ENCODE measurements at regions of chr12 and their contacts with region 1.

Region 1: DNA sequence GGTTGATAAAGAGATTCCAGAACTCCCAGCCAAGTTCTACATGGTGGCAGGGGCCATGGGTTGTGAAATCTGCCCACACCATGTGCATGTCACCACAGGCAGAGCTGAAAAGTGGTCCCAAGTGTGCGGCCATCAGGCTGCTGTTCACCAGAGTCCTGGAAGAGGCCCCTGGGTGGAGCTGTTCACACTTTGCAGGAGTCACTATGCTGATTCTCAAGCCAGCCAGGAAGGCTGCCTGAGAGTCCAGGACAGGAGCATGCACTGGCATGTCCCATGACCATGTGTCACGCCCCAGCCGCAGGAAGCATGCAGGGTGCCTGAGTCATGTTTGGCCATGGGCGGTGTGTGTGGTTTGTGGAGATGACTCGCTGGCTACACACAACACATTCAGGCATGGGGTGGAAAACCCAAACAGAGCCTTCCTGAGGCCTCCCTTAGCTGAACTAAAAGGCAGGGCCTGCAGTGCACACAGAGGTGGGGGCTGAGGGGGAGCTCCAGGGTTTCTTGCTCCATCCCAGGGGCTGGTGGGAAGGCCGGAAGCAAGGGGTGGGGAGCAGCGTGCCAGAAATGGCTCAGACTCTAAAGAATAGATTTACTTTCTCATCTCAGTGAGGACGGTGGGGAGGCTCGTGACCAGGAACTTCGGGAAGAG is 19.4 kb downstream of the ABCB9 start:
- DNase-seq: peak; percentile 80
- H3K4me3 Mint-ChIP-seq: peak overlapping the region; percentile 49
- H3K27ac Mint-ChIP-seq: peak overlapping the region; percentile 73
- H3K4me1 Mint-ChIP-seq: peaks cover 43% of the 10 kb centered on the region
- H3K27me3 Mint-ChIP-seq: peaks cover 1% of the 10 kb centered on the region

Region 2: GRCh38 chr12:122888232-122888867 is 58.5 kb before region 1 on chr12:
- intact Hi-C with region 1: loop called (anchors 1 kb)
- DNase-seq: peak; percentile 40
- H3K4me3 Mint-ChIP-seq: peak overlapping the region; percentile 81
- H3K27ac Mint-ChIP-seq: peak overlapping the region; percentile 90
- H3K4me1 Mint-ChIP-seq: peaks cover 65% of the 10 kb centered on the region
- H3K27me3 Mint-ChIP-seq: peaks cover 5% of the 10 kb centered on the region

Region 3: GRCh38 chr12:122895705-122896636 is 50.8 kb before region 1 on chr12 and contains the start of gene VPS37B:
- intact Hi-C with region 1: loop called (anchors 1 kb)
- DNase-seq: peak; percentile 87
- H3K4me3 Mint-ChIP-seq: peak within 1 kb of the TSS; percentile 91
- H3K27ac Mint-ChIP-seq: peak within 1 kb of the TSS; percentile 91
- H3K4me1 Mint-ChIP-seq: peaks cover 93% of the 10 kb centered on the region
- H3K27me3 Mint-ChIP-seq: peaks cover 5% of the 10 kb centered on the region
- total RNA-seq, gene VPS37B: 12.7 and 14.3 TPM in 2 replicates

Region 4: DNA sequence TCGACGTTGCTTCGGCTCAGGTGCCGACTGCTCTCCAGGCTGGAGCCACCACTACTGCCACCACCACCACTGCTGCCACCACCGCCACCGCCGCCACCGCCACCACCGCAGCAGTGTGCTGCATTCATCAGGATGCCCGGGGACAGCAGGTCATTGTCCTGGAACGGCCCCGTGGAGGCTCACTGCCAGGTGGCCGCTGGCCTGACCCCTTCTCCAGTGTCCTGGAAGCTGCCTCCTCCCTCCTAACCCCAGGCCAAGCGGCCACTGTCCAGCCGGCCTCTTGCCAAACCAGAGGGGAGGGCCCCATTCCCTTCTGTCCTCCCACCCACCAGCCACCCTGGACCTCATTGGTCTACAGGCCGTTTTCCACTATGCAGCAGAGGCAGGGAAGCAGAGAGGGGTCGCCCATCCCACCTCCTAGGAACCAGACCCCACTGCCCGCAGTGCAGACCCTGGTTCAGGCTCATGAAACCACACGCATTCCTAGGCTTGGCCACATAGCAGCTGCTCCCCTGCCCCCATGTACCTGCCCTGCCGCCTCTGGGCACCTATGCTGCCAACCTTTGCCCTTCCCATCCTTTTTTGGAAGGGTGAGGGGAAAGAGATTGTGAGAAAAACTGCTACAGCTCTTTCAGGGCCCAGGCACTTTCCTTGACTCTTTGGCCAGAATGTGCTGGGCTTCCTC is 48.8 kb after region 1 on chr12:
- intact Hi-C with region 1: no loop called
- DNase-seq: no peak
- H3K4me3 Mint-ChIP-seq: no peak overlapping the region
- H3K27ac Mint-ChIP-seq: no peak overlapping the region
- H3K4me1 Mint-ChIP-seq: peaks cover 7% of the 10 kb centered on the region
- H3K27me3 Mint-ChIP-seq: no peaks in the 10 kb centered on the region

Measured in activated T-helper 1 cell treated with anti-CD3 and anti-CD28 coated beads, Interleukin-12 subunit alpha, Interleukin-12 subunit beta, Interleukin-2, Interleukin-4 antibody, amounts not matched to agents 30 ng/mL and 10 ng/mL and 1 ng/mL, durations not matched to agents 14 hours and 24 hours and 36 hours (primary cell).